MCF 10A (cell line): ENCODE measurements at regions of chr5 and their contacts with region 1.

Region 1: GRCh38 chr5:81751009-81751835 is at the start of gene SSBP2:
- DNase-seq: peak; percentile 99
- H3K4me3 Mint-ChIP-seq: peak within 1 kb of the TSS; percentile 90
- H3K27ac Mint-ChIP-seq: peak within 1 kb of the TSS; percentile 89
- H3K4me1 Mint-ChIP-seq: peaks cover 51% of the 10 kb centered on the region
- H3K27me3 Mint-ChIP-seq: no peaks in the 10 kb centered on the region
- CTCF ChIP-seq: no peak
- total RNA-seq, gene SSBP2: 36.0 and 52.7 TPM in 2 replicates

Region 2: GRCh38 chr5:81425569-81425968 is 325.7 kb before region 1 on chr5:
- CTCF ChIA-PET with region 1: interaction called, 4 read pairs
- POLR2A ChIA-PET with region 1: no interaction called
- intact Hi-C with region 1: loop called (anchors 2 kb)
- DNase-seq: peak; percentile 49
- H3K4me3 Mint-ChIP-seq: no peak overlapping the region
- H3K27ac Mint-ChIP-seq: peak overlapping the region; percentile 16
- H3K4me1 Mint-ChIP-seq: peaks cover 16% of the 10 kb centered on the region
- H3K27me3 Mint-ChIP-seq: no peaks in the 10 kb centered on the region
- CTCF ChIP-seq: peak; percentile 51

Region 3: DNA sequence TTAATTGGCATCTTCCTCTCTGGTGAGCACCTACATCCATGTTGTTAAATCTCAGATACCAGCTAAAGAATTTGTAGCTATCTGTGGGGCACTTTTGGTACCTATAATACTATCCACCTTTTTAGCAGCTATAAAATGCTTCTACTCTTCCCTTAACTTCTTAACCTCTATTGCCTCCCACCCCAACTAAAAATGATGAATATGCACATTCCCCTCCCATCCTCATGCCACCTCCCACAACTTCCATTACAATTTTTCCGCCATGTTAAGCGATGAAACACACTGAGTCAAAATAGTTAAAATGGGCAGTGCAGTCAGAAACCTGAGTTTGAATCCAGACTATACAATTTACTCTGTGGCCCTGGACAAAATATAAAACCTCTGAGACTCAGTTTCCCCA is 10.5 kb before region 1 on chr5:
- CTCF ChIA-PET with region 1: interaction called, 3 read pairs
- POLR2A ChIA-PET with region 1: interaction called, 12 read pairs
- intact Hi-C with region 1: no loop called
- DNase-seq: no peak
- H3K4me3 Mint-ChIP-seq: no peak overlapping the region
- H3K27ac Mint-ChIP-seq: no peak overlapping the region
- H3K4me1 Mint-ChIP-seq: peaks cover 16% of the 10 kb centered on the region
- H3K27me3 Mint-ChIP-seq: no peaks in the 10 kb centered on the region
- CTCF ChIP-seq: no peak

Region 4: DNA sequence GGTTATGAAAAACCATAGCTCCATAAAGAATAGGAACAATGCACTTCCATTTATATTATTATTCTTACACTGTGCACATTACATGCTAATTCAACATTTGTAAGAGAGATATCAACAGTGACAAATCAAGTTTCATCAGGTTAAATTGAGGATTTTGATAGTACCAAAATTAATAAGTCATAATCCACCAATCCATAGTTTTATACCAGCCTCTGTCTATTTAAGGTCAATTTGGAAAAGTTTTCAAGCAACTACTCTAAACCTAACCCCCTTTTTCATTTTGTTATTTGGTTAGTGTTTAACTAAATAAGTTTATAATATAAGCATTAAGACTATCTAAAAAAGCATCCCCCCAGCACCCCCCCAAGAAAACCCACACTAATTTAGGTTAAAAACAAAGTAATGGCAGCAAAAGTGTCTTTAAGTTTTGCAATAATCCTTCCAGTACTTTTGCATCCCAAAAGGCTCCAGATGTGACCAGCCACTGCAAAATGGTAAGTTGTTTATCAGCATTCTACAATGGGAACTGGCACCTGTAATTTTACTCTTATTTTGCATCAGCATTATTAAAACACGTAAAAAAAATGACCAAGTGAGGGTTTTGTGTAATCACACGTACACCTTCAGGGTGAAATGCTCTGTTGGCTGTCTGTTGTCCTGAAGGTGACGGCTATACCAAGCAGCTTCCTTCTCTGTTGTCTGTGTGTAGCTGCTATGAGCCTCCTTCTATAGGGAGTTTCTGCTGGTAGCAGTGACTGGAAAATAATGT is 36.4 kb after region 1 on chr5:
- CTCF ChIA-PET with region 1: interaction called, 18 read pairs
- POLR2A ChIA-PET with region 1: interaction called, 87 read pairs
- intact Hi-C with region 1: loop called (anchors 1 kb)
- DNase-seq: peak; percentile 93
- H3K4me3 Mint-ChIP-seq: peak overlapping the region; percentile 45
- H3K27ac Mint-ChIP-seq: peak overlapping the region; percentile 92
- H3K4me1 Mint-ChIP-seq: peaks cover 25% of the 10 kb centered on the region
- H3K27me3 Mint-ChIP-seq: no peaks in the 10 kb centered on the region
- CTCF ChIP-seq: no peak

Region 5: GRCh38 chr5:81851481-81852178 is 100.4 kb after region 1 on chr5:
- CTCF ChIA-PET with region 1: interaction called, 23 read pairs
- POLR2A ChIA-PET with region 1: interaction called, 331 read pairs
- intact Hi-C with region 1: loop called (anchors 1 kb)
- DNase-seq: peak; percentile 91
- H3K4me3 Mint-ChIP-seq: peak overlapping the region; percentile 83
- H3K27ac Mint-ChIP-seq: peak overlapping the region; percentile 84
- H3K4me1 Mint-ChIP-seq: peaks cover 33% of the 10 kb centered on the region
- H3K27me3 Mint-ChIP-seq: no peaks in the 10 kb centered on the region
- CTCF ChIP-seq: no peak

Region 6: DNA sequence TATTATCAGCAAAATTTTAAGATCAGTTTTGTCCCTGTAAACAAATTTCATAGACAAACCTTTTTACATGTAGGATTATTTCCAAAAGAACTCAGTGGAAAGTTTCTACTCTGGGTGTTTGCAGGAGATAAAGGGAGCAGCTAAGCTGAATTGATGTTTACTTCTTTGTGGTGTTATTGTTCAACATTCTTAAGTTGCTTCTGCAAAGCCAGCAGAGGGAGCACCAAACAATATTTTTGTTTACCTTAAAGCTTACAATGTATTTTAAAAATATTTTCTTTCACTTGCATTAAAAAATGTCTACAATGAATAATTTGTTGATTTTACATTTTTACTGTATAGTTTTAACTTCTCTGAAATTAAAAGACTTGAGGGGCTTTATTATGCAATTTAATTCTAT is 356.0 kb after region 1 on chr5:
- CTCF ChIA-PET with region 1: interaction called, 7 read pairs
- POLR2A ChIA-PET with region 1: interaction called, 30 read pairs
- intact Hi-C with region 1: loop called (anchors 2 kb)
- DNase-seq: peak; percentile 36
- H3K4me3 Mint-ChIP-seq: no peak overlapping the region
- H3K27ac Mint-ChIP-seq: peak overlapping the region; percentile 50
- H3K4me1 Mint-ChIP-seq: peaks cover 27% of the 10 kb centered on the region
- H3K27me3 Mint-ChIP-seq: no peaks in the 10 kb centered on the region
- CTCF ChIP-seq: peak; percentile 56

Region 7: GRCh38 chr5:82225525-82226172 is 474.4 kb after region 1 on chr5:
- CTCF ChIA-PET with region 1: interaction called, 3 read pairs
- POLR2A ChIA-PET with region 1: no interaction called
- intact Hi-C with region 1: loop called (anchors 1 kb)
- DNase-seq: peak; percentile 75
- H3K4me3 Mint-ChIP-seq: no peak overlapping the region
- H3K27ac Mint-ChIP-seq: no peak overlapping the region
- H3K4me1 Mint-ChIP-seq: peaks cover 12% of the 10 kb centered on the region
- H3K27me3 Mint-ChIP-seq: no peaks in the 10 kb centered on the region
- CTCF ChIP-seq: peak; percentile 85